A549 (cell line): ENCODE measurements at regions of chr19 and their contacts with region 1.

Region 1: DNA sequence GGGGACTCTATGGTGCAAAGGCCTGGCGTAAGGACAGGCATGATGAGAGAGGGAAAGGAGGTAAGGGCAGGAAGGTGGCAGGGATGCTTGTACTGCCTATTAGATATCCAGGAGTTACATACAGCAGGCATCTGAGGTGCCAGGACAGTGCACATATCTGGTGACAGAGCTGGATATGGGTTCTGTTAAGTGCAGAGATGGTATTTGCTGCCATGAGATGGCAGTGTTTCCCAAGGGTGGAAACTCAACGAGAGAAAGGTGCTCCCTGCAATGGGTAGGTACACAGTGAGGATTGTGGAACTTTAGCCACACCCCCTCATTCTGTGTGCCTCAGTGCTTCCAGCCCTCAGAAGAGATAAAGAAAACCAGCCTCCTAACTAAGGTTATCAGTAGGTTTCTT is 6.9 kb downstream of the TNPO2 start:
- DNase-seq: peak in 1 of 2 experiments; percentile 67
- ATAC-seq: peak; percentile 89
- H3K4me3 ChIP-seq: no peak overlapping the region
- H3K27ac ChIP-seq: no peak overlapping the region
- H3K4me1 ChIP-seq: peaks cover 10% of the 10 kb centered on the region; the same call in 1 of the 3 replicates
- CTCF ChIP-seq: peak; percentile 32
- EP300 ChIP-seq: no peak
- POLR2A ChIP-seq: no peak
- RAD21 ChIP-seq: peak; percentile 23 to 51; a peak in 3 of 5 replicates

Region 2: GRCh38 chr19:12757544-12758274 is 40.8 kb after region 1 on chr19:
- CTCF ChIA-PET with region 1: interaction called, 18 read pairs
- POLR2A ChIA-PET with region 1: no interaction called
- DNase-seq: peak; percentile 50 to 79
- ATAC-seq: peak; percentile 89 to 94
- H3K4me3 ChIP-seq: peak overlapping the region; percentile 36
- H3K27ac ChIP-seq: peak overlapping the region; percentile 60 to 83
- H3K4me1 ChIP-seq: 0 out of 3 replicates have a peak, but pooled peaks cover 3% of the 10 kb centered on the region
- CTCF ChIP-seq: peak; percentile 79
- EP300 ChIP-seq: no peak
- POLR2A ChIP-seq: no peak
- RAD21 ChIP-seq: peak; percentile 28 to 40; a peak in 4 of 5 replicates